Sigmoid colon (tissue), 7 donors: ENCODE measurements at regions of chr5 and their contacts with region 1.

Region 1: GRCh38 chr5:41856644-41857491 is 13.4 kb downstream of the OXCT1 start:
- DNase-seq: no peak
- H3K4me3 ChIP-seq: no peak overlapping the region
- H3K27ac ChIP-seq: no peak overlapping the region
- H3K4me1 ChIP-seq: peaks cover 0 to 3% (median 0%) of the 10 kb centered on the region in 4 donors
- H3K27me3 ChIP-seq: no peaks in the 10 kb centered on the region
- CTCF ChIP-seq: peak; percentile 47 to 75 (median 58)
- EP300 ChIP-seq: no peak
- POLR2A ChIP-seq: no peak

Region 2: GRCh38 chr5:41955432-41956024 is 98.7 kb after region 1 on chr5:
- intact Hi-C with region 1: no loop called
- DNase-seq: no peak
- H3K4me3 ChIP-seq: no peak overlapping the region
- H3K27ac ChIP-seq: no peak overlapping the region
- H3K4me1 ChIP-seq: no peaks in the 10 kb centered on the region
- H3K27me3 ChIP-seq: no peaks in the 10 kb centered on the region
- CTCF ChIP-seq: no peak
- EP300 ChIP-seq: no peak
- POLR2A ChIP-seq: no peak

Region 3: GRCh38 chr5:42057254-42057690 is 200.4 kb after region 1 on chr5:
- intact Hi-C with region 1: loop called (anchors 10 kb)
- DNase-seq: no peak
- H3K4me3 ChIP-seq: no peak overlapping the region
- H3K27ac ChIP-seq: no peak overlapping the region
- H3K4me1 ChIP-seq: no peaks in the 10 kb centered on the region
- H3K27me3 ChIP-seq: no peaks in the 10 kb centered on the region
- CTCF ChIP-seq: peak in 3 of 4 experiments; percentile 14 to 35 (median 34)
- EP300 ChIP-seq: no peak
- POLR2A ChIP-seq: no peak

Region 4: GRCh38 chr5:42767491-42768105 is 910.7 kb after region 1 on chr5:
- intact Hi-C with region 1: loop called (anchors 5 kb)
- DNase-seq: no peak
- H3K4me3 ChIP-seq: no peak overlapping the region
- H3K27ac ChIP-seq: no peak overlapping the region
- H3K4me1 ChIP-seq: no peaks in the 10 kb centered on the region
- H3K27me3 ChIP-seq: no peaks in the 10 kb centered on the region
- CTCF ChIP-seq: peak in 2 of 4 experiments; percentile 16 to 49
- EP300 ChIP-seq: no peak
- POLR2A ChIP-seq: no peak

Region 5: GRCh38 chr5:42889311-42889933 is 1032.6 kb after region 1 on chr5:
- intact Hi-C with region 1: loop called (anchors 10 kb)
- DNase-seq: peak; percentile 83
- H3K4me3 ChIP-seq: no peak overlapping the region
- H3K27ac ChIP-seq: no peak overlapping the region
- H3K4me1 ChIP-seq: no peaks in the 10 kb centered on the region
- H3K27me3 ChIP-seq: no peaks in the 10 kb centered on the region
- CTCF ChIP-seq: peak; percentile 34 to 80 (median 70)
- EP300 ChIP-seq: no peak
- POLR2A ChIP-seq: no peak